PC-3 (cell line): ENCODE measurements at regions of chr1 and their contacts with region 1.

Region 1: GRCh38 chr1:85259118-85259911 is at the start of gene C1orf52:
- DNase-seq: peak; percentile 94
- ATAC-seq: peak; percentile 82
- H3K4me3 ChIP-seq: peak within 1 kb of the TSS; percentile 97
- H3K27ac ChIP-seq: peak within 1 kb of the TSS; percentile 49
- H3K4me1 ChIP-seq: peaks cover 27% of the 10 kb centered on the region
- H3K27me3 ChIP-seq: no peaks in the 10 kb centered on the region
- CTCF ChIP-seq: peak; percentile 90
- total RNA-seq, gene C1orf52: 59.9 and 61.0 TPM in 2 replicates

Region 2: GRCh38 chr1:85058311-85058710 is 201.0 kb before region 1 on chr1:
- CTCF ChIA-PET with region 1: no interaction called
- POLR2A ChIA-PET with region 1: no interaction called
- intact Hi-C with region 1: no loop called
- DNase-seq: peak; percentile 22
- ATAC-seq: no peak
- H3K4me3 ChIP-seq: no peak overlapping the region
- H3K27ac ChIP-seq: no peak overlapping the region
- H3K4me1 ChIP-seq: peaks cover 9% of the 10 kb centered on the region
- H3K27me3 ChIP-seq: no peaks in the 10 kb centered on the region
- CTCF ChIP-seq: no peak

Region 3: DNA sequence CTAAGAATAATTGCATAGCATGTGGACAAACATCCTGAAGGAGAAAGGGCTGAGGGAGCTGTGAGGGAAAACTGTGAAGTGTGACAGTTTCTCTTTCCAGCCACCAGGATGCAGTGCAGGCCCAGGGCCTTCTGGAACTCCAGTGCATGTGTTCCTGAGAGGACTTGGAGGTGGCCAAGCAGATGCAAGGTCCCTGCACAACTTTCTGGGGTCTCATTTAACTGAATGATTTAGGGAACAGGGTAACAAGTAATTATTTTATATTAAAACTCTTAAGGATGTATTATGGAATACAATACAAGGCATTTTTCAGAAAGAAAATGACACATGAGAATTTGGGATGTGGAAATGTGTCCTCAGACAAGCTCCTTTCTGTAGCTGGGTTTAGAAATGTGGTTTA is 149.8 kb before region 1 on chr1:
- CTCF ChIA-PET with region 1: interaction called, 24 read pairs
- POLR2A ChIA-PET with region 1: interaction called, 3 read pairs
- intact Hi-C with region 1: loop called (anchors 1 kb)
- DNase-seq: peak; percentile 79
- ATAC-seq: peak; percentile 99
- H3K4me3 ChIP-seq: no peak overlapping the region
- H3K27ac ChIP-seq: no peak overlapping the region
- H3K4me1 ChIP-seq: no peaks in the 10 kb centered on the region
- H3K27me3 ChIP-seq: no peaks in the 10 kb centered on the region
- CTCF ChIP-seq: peak; percentile 86

Region 4: GRCh38 chr1:85297855-85298629 is 38.7 kb after region 1 on chr1:
- CTCF ChIA-PET with region 1: interaction called, 4 read pairs
- POLR2A ChIA-PET with region 1: interaction called, 3 read pairs
- intact Hi-C with region 1: loop called (anchors 2 kb)
- DNase-seq: peak; percentile 99
- ATAC-seq: peak; percentile 71
- H3K4me3 ChIP-seq: peak overlapping the region; percentile 33
- H3K27ac ChIP-seq: peak overlapping the region; percentile 95
- H3K4me1 ChIP-seq: peaks cover 57% of the 10 kb centered on the region
- H3K27me3 ChIP-seq: no peaks in the 10 kb centered on the region
- CTCF ChIP-seq: no peak